ENCODE measurements at regions of chr2 and their contacts with region 1.

Region 1: GRCh38 chr2:220687231-220687843 is 884.8 kb downstream of the EPHA4 start:
- DNase-seq: peak; percentile 53 to 70 (median 65)
- ATAC-seq: peak; percentile 75 to 89 (median 82)
- H3K4me3 ChIP-seq: no peak overlapping the region
- H3K27ac ChIP-seq: no peak overlapping the region
- H3K4me1 ChIP-seq: no peaks in the 10 kb centered on the region
- H3K27me3 ChIP-seq: no peaks in the 10 kb centered on the region
- CTCF ChIP-seq: peak; percentile 86 to 93 (median 88)
- POLR2A ChIP-seq: no peak

Region 2: DNA sequence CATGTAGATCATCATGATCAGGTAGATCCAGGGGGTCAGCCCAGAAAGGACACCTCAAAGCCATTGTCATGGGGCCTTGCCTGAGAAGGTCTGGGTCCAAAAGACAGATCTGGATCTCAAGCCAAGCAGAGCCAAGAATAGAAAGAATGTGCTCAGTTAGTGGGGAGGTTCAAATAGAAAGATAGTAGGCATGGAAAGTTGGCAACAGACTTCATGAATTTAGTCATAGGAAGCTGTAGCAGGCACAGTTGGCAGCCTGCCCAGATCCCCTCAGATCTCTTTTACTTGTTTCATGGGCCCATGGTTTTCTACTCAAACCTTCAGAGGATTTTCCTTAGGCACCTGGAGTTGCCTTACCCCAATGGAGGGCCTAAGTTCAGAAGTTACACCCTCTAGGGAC is 292.9 kb before region 1 on chr2:
- intact Hi-C with region 1: no loop called
- DNase-seq: peak in 4 of 5 donors; percentile 37 to 69 (median 47)
- ATAC-seq: peak; percentile 20 to 74 (median 64)
- H3K4me3 ChIP-seq: no peak overlapping the region
- H3K27ac ChIP-seq: peak overlapping the region in 6 of 12 donors; percentile 6 to 82 (median 40)
- H3K4me1 ChIP-seq: peaks cover 0 to 13% (median 0%) of the 10 kb centered on the region in 12 donors
- H3K27me3 ChIP-seq: no peaks in the 10 kb centered on the region
- CTCF ChIP-seq: no peak
- POLR2A ChIP-seq: no peak

Region 3: GRCh38 chr2:221075203-221075602 is 387.9 kb after region 1 on chr2:
- intact Hi-C with region 1: loop called in 1 of 10 experiments (anchors 10 kb)
- DNase-seq: no peak
- ATAC-seq: no peak
- H3K4me3 ChIP-seq: no peak overlapping the region
- H3K27ac ChIP-seq: no peak overlapping the region
- H3K4me1 ChIP-seq: peaks cover 0 to 20% (median 0%) of the 10 kb centered on the region in 12 donors
- H3K27me3 ChIP-seq: no peaks in the 10 kb centered on the region
- CTCF ChIP-seq: no peak
- POLR2A ChIP-seq: no peak

Region 4: GRCh38 chr2:221228214-221228769 is 541.0 kb after region 1 on chr2:
- intact Hi-C with region 1: loop called in 1 of 10 experiments (anchors 10 kb)
- DNase-seq: peak in 1 of 5 donors; percentile 9
- ATAC-seq: peak in 3 of 4 donors; percentile 22 to 58 (median 34)
- H3K4me3 ChIP-seq: no peak overlapping the region
- H3K27ac ChIP-seq: peak overlapping the region; percentile 4 to 75 (median 44)
- H3K4me1 ChIP-seq: peaks cover 0 to 24% (median 5%) of the 10 kb centered on the region in 12 donors
- H3K27me3 ChIP-seq: no peaks in the 10 kb centered on the region
- CTCF ChIP-seq: no peak
- POLR2A ChIP-seq: no peak

Region 5: DNA sequence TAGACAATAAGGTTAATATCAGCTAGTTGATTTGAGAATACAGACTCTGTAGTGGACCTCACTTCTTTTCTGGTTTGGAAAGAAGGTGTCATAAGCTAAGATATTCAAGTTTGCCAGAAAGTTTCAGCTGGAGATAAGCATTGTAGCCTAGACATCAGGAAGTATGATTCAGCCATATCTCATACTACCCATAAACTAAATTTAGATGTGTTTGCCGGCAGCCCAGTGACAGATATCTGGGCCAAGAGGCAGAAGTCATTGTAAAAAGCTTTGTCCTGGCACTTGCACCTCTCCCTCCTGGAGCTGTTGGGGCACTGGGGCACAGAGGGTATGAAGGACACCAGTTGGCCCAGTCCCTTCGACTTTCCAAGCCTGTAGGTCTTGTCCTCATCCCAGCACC is 756.8 kb after region 1 on chr2:
- intact Hi-C with region 1: loop called in 1 of 10 experiments (anchors 10 kb)
- DNase-seq: peak in 4 of 5 donors; percentile 29 to 74 (median 62)
- ATAC-seq: peak; percentile 84 to 98 (median 94)
- H3K4me3 ChIP-seq: no peak overlapping the region
- H3K27ac ChIP-seq: peak overlapping the region in 10 of 12 donors; percentile 10 to 76 (median 40)
- H3K4me1 ChIP-seq: peaks cover 0 to 27% (median 12%) of the 10 kb centered on the region in 12 donors
- H3K27me3 ChIP-seq: no peaks in the 10 kb centered on the region
- CTCF ChIP-seq: no peak
- POLR2A ChIP-seq: no peak

Measured in heart left ventricle (tissue), 16 donors.